HepG2 (cell line): ENCODE measurements at regions of chr3 and their contacts with region 1.

Region 1: GRCh38 chr3:57949785-57950615 is 58.2 kb upstream of the FLNB start:
- DNase-seq: peak; percentile 38
- ATAC-seq: peak; percentile 30
- H3K4me3 ChIP-seq: no peak overlapping the region
- H3K27ac ChIP-seq: peak overlapping the region; percentile 90
- H3K4me1 ChIP-seq: peaks cover 87% of the 10 kb centered on the region
- H3K27me3 ChIP-seq: no peaks in the 10 kb centered on the region; a peak in 1 of 5 replicates
- CTCF ChIP-seq: no peak
- EP300 ChIP-seq: no peak
- POLR2A ChIP-seq: no peak
- RAD21 ChIP-seq: no peak

Region 2: DNA sequence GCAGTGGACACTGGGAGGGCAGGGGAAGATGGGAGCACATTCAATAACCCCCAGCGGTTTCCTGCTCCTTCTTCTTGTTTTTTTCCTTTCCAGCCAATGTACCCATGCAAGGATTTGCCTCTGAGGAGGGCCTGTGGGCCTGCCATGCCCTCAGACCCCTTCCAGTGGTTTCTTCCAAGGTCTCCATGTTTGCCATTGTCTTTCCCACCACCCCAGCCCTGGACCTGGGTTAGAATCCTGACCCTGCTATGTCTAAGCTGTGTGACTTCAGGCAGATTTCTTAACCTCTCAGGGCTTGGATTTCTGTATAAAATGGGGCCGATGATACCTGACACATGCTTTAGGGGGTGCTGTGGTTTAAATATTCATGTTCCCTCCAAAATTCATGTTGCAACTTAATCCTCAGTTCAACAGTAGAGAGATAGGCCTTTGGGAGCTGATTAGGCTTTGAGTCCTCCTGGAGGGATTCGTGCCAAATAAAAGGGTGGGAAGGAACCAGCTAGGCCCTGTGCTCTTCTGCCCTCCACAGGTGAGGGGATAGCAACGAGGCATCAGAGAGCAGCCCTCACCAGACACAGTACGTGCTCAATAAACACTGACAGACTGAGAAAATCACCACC is 11.9 kb after region 1 on chr3:
- CTCF ChIA-PET with region 1: no interaction called
- POLR2A ChIA-PET with region 1: interaction called, 17 read pairs
- in situ Hi-C with region 1: no loop called
- intact Hi-C with region 1: no loop called
- DNase-seq: peak; percentile 80
- ATAC-seq: peak; percentile 47
- H3K4me3 ChIP-seq: peak overlapping the region in 1 of 3 experiments; percentile 60; a peak in 2 of 6 replicates
- H3K27ac ChIP-seq: peak overlapping the region; percentile 74
- H3K4me1 ChIP-seq: peaks cover 59% of the 10 kb centered on the region
- H3K27me3 ChIP-seq: no peaks in the 10 kb centered on the region
- CTCF ChIP-seq: peak; percentile 70
- EP300 ChIP-seq: no peak
- POLR2A ChIP-seq: no peak
- RAD21 ChIP-seq: peak; percentile 78

Region 3: DNA sequence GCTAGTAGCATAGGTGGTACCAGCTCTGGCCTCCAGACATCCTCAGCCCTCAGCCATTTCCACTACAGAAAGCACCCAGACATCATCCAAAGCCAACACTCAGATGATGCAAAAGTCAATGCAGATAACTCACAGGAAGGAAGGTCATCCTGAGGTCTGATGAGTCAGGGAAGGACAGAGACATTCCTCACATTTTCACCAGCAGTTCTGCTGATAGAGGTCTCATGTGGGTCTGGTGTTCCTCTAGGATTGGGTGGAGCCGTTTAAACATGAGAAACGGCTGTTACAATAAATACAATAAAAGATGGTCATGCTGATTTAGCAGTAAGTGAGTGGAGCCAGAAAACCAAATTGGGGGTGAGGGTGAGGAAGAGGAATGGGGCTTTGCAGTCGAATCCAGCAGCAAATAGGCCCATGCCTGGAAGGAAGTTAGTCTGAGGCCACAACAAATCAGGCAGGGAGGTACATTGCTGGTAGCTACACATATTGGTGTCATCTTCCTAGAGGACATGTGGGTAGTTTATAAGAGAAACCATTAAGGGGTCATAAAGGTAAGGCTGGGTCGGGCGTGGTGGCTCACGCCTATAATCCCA is 24.9 kb after region 1 on chr3:
- CTCF ChIA-PET with region 1: no interaction called
- POLR2A ChIA-PET with region 1: interaction called, 10 read pairs
- in situ Hi-C with region 1: no loop called
- intact Hi-C with region 1: no loop called
- DNase-seq: peak; percentile 96
- ATAC-seq: peak; percentile 89
- H3K4me3 ChIP-seq: no peak overlapping the region
- H3K27ac ChIP-seq: peak overlapping the region; percentile 1
- H3K4me1 ChIP-seq: peaks cover 78% of the 10 kb centered on the region
- H3K27me3 ChIP-seq: no peaks in the 10 kb centered on the region
- CTCF ChIP-seq: no peak
- EP300 ChIP-seq: peak; percentile 62 to 80; a peak in 3 of 4 replicates
- POLR2A ChIP-seq: no peak
- RAD21 ChIP-seq: no peak

Region 4: GRCh38 chr3:57992452-57993213 is 42.6 kb after region 1 on chr3:
- CTCF ChIA-PET with region 1: no interaction called
- POLR2A ChIA-PET with region 1: interaction called, 6 read pairs
- in situ Hi-C with region 1: no loop called
- intact Hi-C with region 1: loop called (anchors 2 kb)
- DNase-seq: peak; percentile 96
- ATAC-seq: peak; percentile 99
- H3K4me3 ChIP-seq: peak overlapping the region in 2 of 3 experiments; percentile 22 to 36; a peak in 3 of 6 replicates
- H3K27ac ChIP-seq: peak overlapping the region; percentile 70
- H3K4me1 ChIP-seq: peaks cover 54% of the 10 kb centered on the region
- H3K27me3 ChIP-seq: no peaks in the 10 kb centered on the region
- CTCF ChIP-seq: no peak
- EP300 ChIP-seq: peak in 1 of 2 experiments; percentile 87; a peak in 3 of 4 replicates
- POLR2A ChIP-seq: no peak
- RAD21 ChIP-seq: no peak

Region 5: DNA sequence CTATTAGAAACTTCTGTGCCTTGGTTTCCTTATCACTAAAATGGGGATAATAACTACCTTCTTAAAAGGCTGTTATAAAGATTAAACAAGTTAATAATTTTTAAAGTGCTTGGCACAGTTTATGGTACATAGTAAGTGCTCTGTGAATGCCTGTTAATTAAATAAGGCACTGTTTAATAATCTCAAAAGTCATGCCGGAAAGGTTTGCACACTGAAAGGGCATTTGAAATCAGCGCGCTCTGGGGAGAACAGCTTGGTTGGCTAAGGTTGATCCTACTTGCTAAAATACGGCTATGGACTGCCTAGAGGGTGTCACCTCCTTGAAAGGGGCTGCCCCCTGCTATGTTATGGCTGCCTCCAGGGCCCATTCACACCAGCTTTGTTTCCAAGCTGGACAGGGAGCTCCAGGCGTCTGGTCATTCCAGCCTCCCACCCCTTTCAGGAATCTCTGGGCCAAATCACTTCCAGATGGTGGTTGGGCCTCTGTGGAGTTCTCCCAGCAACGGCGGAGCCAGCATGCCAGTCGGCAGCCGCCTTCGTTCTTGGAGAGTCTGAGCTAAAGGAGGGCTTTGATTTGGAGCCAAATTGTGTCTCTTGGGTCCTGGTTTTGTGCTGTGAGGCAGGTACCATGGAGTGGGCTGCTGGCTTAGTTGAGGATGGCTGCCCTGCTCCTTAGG is 64.1 kb after region 1 on chr3:
- CTCF ChIA-PET with region 1: no interaction called
- POLR2A ChIA-PET with region 1: no interaction called
- in situ Hi-C with region 1: no loop called
- intact Hi-C with region 1: no loop called
- DNase-seq: no peak
- ATAC-seq: no peak
- H3K4me3 ChIP-seq: peak overlapping the region in 1 of 3 experiments; percentile 5; a peak in 1 of 6 replicates
- H3K27ac ChIP-seq: peak overlapping the region; percentile 1
- H3K4me1 ChIP-seq: peaks cover 91% of the 10 kb centered on the region
- H3K27me3 ChIP-seq: no peaks in the 10 kb centered on the region; a peak in 1 of 5 replicates
- CTCF ChIP-seq: no peak
- EP300 ChIP-seq: no peak
- POLR2A ChIP-seq: no peak
- RAD21 ChIP-seq: no peak

Region 6: GRCh38 chr3:58120075-58120812 is 170.2 kb after region 1 on chr3:
- CTCF ChIA-PET with region 1: no interaction called
- POLR2A ChIA-PET with region 1: no interaction called
- in situ Hi-C with region 1: no loop called
- intact Hi-C with region 1: no loop called
- DNase-seq: no peak
- ATAC-seq: no peak
- H3K4me3 ChIP-seq: no peak overlapping the region
- H3K27ac ChIP-seq: no peak overlapping the region
- H3K4me1 ChIP-seq: peaks cover 18% of the 10 kb centered on the region; the same call in 1 of the 2 replicates
- H3K27me3 ChIP-seq: no peaks in the 10 kb centered on the region
- CTCF ChIP-seq: no peak
- EP300 ChIP-seq: no peak
- POLR2A ChIP-seq: no peak
- RAD21 ChIP-seq: no peak